ENCODE measurements at regions of chr4 and their contacts with region 1.

Region 1: GRCh38 chr4:13430834-13431568 is 53.1 kb downstream of the RAB28 start:
- DNase-seq: no peak
- ATAC-seq: no peak
- H3K4me3 Mint-ChIP-seq: no peak overlapping the region
- H3K27ac Mint-ChIP-seq: no peak overlapping the region
- H3K4me1 Mint-ChIP-seq: peaks cover 18% of the 10 kb centered on the region
- H3K27me3 Mint-ChIP-seq: no peaks in the 10 kb centered on the region

Region 2: GRCh38 chr4:12729384-12729783 is 701.6 kb before region 1 on chr4:
- CTCF ChIA-PET with region 1: no interaction called
- POLR2A ChIA-PET with region 1: no interaction called
- intact Hi-C with region 1: loop called in 1 of 2 experiments (anchors 10 kb)
- DNase-seq: no peak
- ATAC-seq: no peak
- H3K4me3 Mint-ChIP-seq: no peak overlapping the region
- H3K27ac Mint-ChIP-seq: no peak overlapping the region
- H3K4me1 Mint-ChIP-seq: peaks cover 1% of the 10 kb centered on the region
- H3K27me3 Mint-ChIP-seq: peaks cover 17% of the 10 kb centered on the region

Region 3: DNA sequence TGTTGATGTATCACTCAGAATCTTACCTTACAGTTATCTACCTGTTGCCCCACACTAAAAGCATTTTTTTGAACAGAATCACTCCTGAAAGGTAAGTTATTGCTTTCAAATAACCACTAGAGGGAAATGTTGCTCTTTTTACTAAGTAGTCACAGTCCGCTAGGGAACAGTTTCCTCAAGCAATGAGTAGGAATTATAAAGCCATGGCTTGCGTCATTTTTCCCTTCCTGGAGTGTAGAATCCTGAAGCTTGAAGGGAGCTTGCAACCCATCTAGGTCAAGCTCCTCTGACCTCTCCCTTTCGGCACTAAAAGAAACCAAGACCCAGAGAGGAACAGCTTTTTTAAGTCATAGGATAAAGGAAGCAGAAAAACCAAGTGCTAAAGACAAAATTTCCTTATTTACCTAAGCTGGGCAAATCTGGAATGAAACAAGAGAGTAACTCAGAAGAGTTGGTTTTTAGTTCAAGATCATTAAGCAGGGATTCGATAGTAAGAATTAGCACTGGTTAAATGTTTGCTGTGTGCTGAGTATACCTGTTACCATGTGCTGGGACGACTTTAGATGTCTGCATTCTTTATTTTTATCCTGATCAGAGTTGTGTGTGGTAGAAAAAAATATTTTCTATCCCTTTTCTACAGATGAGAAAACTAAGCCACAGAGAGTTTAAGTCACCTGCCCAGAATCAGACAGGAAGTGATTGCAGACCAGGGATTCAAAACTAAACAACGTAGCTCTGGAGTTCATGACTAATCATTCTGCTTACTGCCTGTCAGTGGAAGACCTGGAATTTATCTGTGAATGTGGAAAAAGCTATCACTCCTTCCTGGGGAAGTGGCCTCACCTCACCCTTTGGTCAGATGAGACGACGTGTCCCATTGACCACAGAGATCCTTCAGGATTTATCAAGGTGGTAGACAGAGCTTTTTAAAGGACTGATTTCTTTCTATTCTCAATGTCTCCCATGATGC is 578.4 kb before region 1 on chr4:
- CTCF ChIA-PET with region 1: no interaction called
- POLR2A ChIA-PET with region 1: no interaction called
- intact Hi-C with region 1: loop called in 1 of 2 experiments (anchors 1 kb)
- DNase-seq: no peak
- ATAC-seq: peak; percentile 19
- H3K4me3 Mint-ChIP-seq: no peak overlapping the region
- H3K27ac Mint-ChIP-seq: no peak overlapping the region
- H3K4me1 Mint-ChIP-seq: no peaks in the 10 kb centered on the region
- H3K27me3 Mint-ChIP-seq: peaks cover 4% of the 10 kb centered on the region

Region 4: DNA sequence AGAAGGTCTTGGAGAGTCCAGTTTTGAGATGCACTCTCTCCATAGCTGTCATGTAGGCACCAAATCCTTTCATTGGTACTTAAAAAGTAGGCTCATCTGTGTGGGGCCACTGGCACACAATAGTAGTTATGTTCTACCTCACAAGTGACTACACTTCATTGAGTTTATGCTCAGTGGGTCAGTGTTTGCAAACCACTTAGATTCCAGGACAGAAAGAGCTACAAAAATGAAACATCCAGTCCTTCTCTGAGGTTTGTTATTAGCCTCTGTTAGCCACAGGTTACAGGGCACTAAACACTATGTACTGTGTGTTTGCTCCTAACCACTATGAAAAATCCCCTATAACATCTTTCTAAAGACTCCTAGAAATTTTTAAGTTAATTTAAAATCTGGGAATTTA is 39.4 kb after region 1 on chr4:
- CTCF ChIA-PET with region 1: no interaction called
- POLR2A ChIA-PET with region 1: no interaction called
- intact Hi-C with region 1: no loop called
- DNase-seq: no peak
- ATAC-seq: no peak
- H3K4me3 Mint-ChIP-seq: no peak overlapping the region
- H3K27ac Mint-ChIP-seq: no peak overlapping the region
- H3K4me1 Mint-ChIP-seq: peaks cover 16% of the 10 kb centered on the region
- H3K27me3 Mint-ChIP-seq: no peaks in the 10 kb centered on the region

Region 5: GRCh38 chr4:13584481-13584880 is 153.5 kb after region 1 on chr4:
- CTCF ChIA-PET with region 1: no interaction called
- POLR2A ChIA-PET with region 1: no interaction called
- intact Hi-C with region 1: no loop called
- DNase-seq: no peak
- ATAC-seq: no peak
- H3K4me3 Mint-ChIP-seq: no peak overlapping the region
- H3K27ac Mint-ChIP-seq: no peak overlapping the region
- H3K4me1 Mint-ChIP-seq: no peaks in the 10 kb centered on the region
- H3K27me3 Mint-ChIP-seq: no peaks in the 10 kb centered on the region